Activated T-helper 1 cell treated with anti-CD3 and anti-CD28 coated beads, Interleukin-12 subunit alpha, Interleukin-12 subunit beta, Interleukin-2, Interleukin-4 antibody, amounts not matched to agents 30 ng/mL and 10 ng/mL and 1 ng/mL, durations not matched to agents 14 hours and 24 hours and 36 hours (primary cell): ENCODE measurements at regions of chr22 and their contacts with region 1.

Region 1: GRCh38 chr22:32660292-32660691 is 141.2 kb upstream of the TIMP3 start:
- DNase-seq: peak; percentile 32
- H3K4me3 Mint-ChIP-seq: no peak overlapping the region
- H3K27ac Mint-ChIP-seq: no peak overlapping the region
- H3K4me1 Mint-ChIP-seq: no peaks in the 10 kb centered on the region
- H3K27me3 Mint-ChIP-seq: peaks cover 9% of the 10 kb centered on the region

Region 2: GRCh38 chr22:32796865-32797573 is 136.7 kb after region 1 on chr22:
- intact Hi-C with region 1: loop called (anchors 1 kb)
- DNase-seq: peak; percentile 24
- H3K4me3 Mint-ChIP-seq: no peak overlapping the region
- H3K27ac Mint-ChIP-seq: no peak overlapping the region
- H3K4me1 Mint-ChIP-seq: no peaks in the 10 kb centered on the region
- H3K27me3 Mint-ChIP-seq: peaks cover 23% of the 10 kb centered on the region

Region 3: GRCh38 chr22:32985899-32986765 is 325.8 kb after region 1 on chr22:
- intact Hi-C with region 1: loop called (anchors 5 kb)
- DNase-seq: peak; percentile 28
- H3K4me3 Mint-ChIP-seq: no peak overlapping the region
- H3K27ac Mint-ChIP-seq: no peak overlapping the region
- H3K4me1 Mint-ChIP-seq: no peaks in the 10 kb centered on the region
- H3K27me3 Mint-ChIP-seq: no peaks in the 10 kb centered on the region